Activated CD4-positive, alpha-beta T cell treated with anti-CD3 and anti-CD28 coated beads, Interleukin-2, amount 10 ng/mL, durations not matched to agents 7 days and 5 days (primary cell): ENCODE measurements at regions of chr3 and their contacts with region 1.

Region 1: GRCh38 chr3:39288300-39288808 is 8.5 kb upstream of the CX3CR1 start:
- DNase-seq: peak; percentile 88
- H3K4me3 Mint-ChIP-seq: no peak overlapping the region
- H3K27ac Mint-ChIP-seq: peak overlapping the region; percentile 37
- H3K4me1 Mint-ChIP-seq: peaks cover 45% of the 10 kb centered on the region
- H3K27me3 Mint-ChIP-seq: no peaks in the 10 kb centered on the region

Region 2: GRCh38 chr3:39107388-39108199 is 180.8 kb before region 1 on chr3 and contains the starts of genes GORASP1 and TTC21A:
- CTCF ChIA-PET with region 1: interaction called, 21 read pairs
- POLR2A ChIA-PET with region 1: no interaction called
- DNase-seq: peak; percentile 76
- H3K4me3 Mint-ChIP-seq: peak within 1 kb of the TSS; percentile 79
- H3K27ac Mint-ChIP-seq: peak within 1 kb of the TSS; percentile 88
- H3K4me1 Mint-ChIP-seq: peaks cover 57% of the 10 kb centered on the region
- H3K27me3 Mint-ChIP-seq: no peaks in the 10 kb centered on the region
- total RNA-seq, gene GORASP1: 31.6 to 33.7 TPM
- total RNA-seq, gene TTC21A: 3.8 to 5.1 TPM

Region 3: DNA sequence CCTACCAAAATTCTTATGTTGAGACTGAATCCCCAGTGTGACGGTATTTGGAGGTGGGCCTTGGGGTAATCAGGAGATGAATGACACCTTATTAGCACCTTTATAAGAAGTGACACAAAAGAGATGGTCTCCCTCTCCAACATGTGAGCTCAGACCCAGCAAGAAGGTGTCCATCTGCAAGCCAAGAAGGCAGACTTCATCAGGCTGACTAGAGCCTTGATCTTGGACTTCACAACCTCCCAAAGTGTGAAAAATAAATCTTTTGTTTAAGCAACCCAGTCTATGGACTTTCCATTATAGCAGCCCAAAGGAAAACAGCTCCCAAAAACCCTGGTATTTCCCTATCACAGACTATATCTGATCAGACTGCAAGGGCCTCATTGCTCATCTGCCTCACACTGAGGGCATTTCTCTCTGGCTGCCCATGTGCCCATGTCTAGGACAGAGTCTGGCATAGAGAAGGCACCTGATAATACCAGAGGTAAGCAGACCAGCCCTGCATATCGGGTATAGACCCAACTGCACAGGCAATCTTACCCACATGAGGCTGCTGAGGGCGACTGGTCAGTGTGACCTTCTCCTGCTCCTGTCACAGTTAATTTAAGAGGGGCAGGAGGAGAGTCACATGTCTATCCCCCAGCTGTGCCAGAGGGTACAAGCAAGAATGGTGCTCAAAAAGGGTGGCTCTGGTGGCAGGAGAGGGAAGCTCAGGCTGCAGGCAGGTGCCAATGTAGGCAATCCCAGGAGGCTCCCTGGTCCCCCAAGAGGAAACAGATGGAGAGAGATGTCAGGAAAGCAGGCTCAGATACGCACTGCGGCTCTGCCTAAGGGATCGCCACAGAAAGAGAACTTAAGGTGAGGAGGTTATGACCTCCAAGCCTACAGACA is 138.2 kb before region 1 on chr3:
- CTCF ChIA-PET with region 1: interaction called, 11 read pairs
- POLR2A ChIA-PET with region 1: interaction called, 3 read pairs
- DNase-seq: no peak
- H3K4me3 Mint-ChIP-seq: peak overlapping the region; percentile 89
- H3K27ac Mint-ChIP-seq: peak overlapping the region; percentile 97
- H3K4me1 Mint-ChIP-seq: peaks cover 78% of the 10 kb centered on the region
- H3K27me3 Mint-ChIP-seq: no peaks in the 10 kb centered on the region

Region 4: GRCh38 chr3:39189959-39190269 is 98.4 kb before region 1 on chr3:
- CTCF ChIA-PET with region 1: interaction called, 275 read pairs
- POLR2A ChIA-PET with region 1: no interaction called
- DNase-seq: peak; percentile 66
- H3K4me3 Mint-ChIP-seq: no peak overlapping the region
- H3K27ac Mint-ChIP-seq: peak overlapping the region; percentile 43
- H3K4me1 Mint-ChIP-seq: peaks cover 8% of the 10 kb centered on the region
- H3K27me3 Mint-ChIP-seq: no peaks in the 10 kb centered on the region

Region 5: DNA sequence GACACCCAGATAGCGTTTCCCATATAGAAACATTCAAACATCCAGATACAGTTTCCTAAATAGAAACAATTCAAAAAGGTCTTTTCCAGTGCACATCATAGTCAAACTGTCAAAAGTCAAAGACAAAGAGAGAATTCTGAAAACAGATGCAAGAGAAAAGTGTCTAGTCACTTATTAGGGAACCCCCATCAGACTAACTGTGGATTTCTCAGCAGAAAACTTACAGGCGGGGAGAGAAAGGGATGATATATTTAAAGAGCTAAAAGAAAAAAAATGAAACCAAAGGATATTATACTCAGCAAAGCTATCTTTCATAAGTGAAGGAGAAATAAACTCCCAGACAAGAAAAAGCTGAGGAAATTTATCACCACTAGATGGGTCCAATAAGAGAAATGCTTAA is 13.8 kb after region 1 on chr3:
- CTCF ChIA-PET with region 1: interaction called, 17 read pairs
- POLR2A ChIA-PET with region 1: no interaction called
- DNase-seq: no peak
- H3K4me3 Mint-ChIP-seq: no peak overlapping the region
- H3K27ac Mint-ChIP-seq: no peak overlapping the region
- H3K4me1 Mint-ChIP-seq: peaks cover 2% of the 10 kb centered on the region
- H3K27me3 Mint-ChIP-seq: peaks cover 40% of the 10 kb centered on the region

Region 6: DNA sequence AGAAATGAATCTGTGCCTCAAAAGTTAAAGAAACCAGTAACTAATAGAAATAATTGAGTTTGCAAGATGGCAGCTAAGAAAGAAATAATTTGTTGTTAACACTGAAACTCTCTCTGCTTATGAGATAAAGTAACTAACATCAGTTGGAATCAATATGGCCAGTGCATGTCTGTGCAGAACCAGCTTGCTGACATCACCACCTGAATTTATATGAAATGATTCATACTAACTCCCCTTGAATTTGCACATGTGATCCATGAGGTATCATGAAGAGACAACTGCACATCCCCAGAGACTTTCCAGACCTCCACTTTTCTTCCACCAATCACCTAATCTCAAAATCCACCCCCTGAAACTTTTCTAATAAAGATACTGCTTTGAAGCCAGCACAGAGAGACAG is 84.5 kb after region 1 on chr3:
- CTCF ChIA-PET with region 1: interaction called, 22 read pairs
- POLR2A ChIA-PET with region 1: interaction called, 5 read pairs
- DNase-seq: no peak
- H3K4me3 Mint-ChIP-seq: no peak overlapping the region
- H3K27ac Mint-ChIP-seq: no peak overlapping the region
- H3K4me1 Mint-ChIP-seq: peaks cover 3% of the 10 kb centered on the region
- H3K27me3 Mint-ChIP-seq: peaks cover 27% of the 10 kb centered on the region